ENCODE measurements at regions of chr2 and their contacts with region 1.

Region 1: GRCh38 chr2:23092831-23093230 is 292.1 kb upstream of the KLHL29 start:
- DNase-seq: peak in 1 of 2 experiments; percentile 43
- H3K4me3 ChIP-seq: no peak overlapping the region
- H3K4me3 Mint-ChIP-seq: no peak overlapping the region
- H3K27ac Mint-ChIP-seq: no peak overlapping the region
- H3K4me1 ChIP-seq: no peaks in the 10 kb centered on the region
- H3K4me1 Mint-ChIP-seq: peaks cover 3% of the 10 kb centered on the region
- H3K27me3 ChIP-seq: no peaks in the 10 kb centered on the region
- H3K27me3 Mint-ChIP-seq: peaks cover 2% of the 10 kb centered on the region
- CTCF ChIP-seq: no peak

Region 2: DNA sequence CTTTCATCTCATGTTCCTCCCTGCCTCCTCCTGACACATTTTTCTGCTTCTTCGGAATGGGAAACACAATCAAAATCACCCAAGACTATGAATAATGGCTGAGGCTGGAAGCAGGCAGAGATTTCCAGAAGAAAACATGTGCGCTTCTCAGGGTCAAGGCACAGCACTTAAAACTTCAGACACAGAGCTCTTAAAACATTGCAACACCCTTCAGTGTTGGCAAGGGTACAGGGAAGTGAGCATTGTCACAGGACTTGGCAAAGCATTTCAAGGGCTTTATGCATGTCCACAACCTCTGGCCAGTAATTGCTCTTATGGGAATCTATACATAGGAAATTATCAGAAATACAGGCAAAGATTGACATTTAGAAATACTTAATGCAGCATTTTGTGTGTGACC is 185.5 kb before region 1 on chr2:
- CTCF ChIA-PET with region 1: no interaction called
- POLR2A ChIA-PET with region 1: no interaction called
- intact Hi-C with region 1: no loop called
- DNase-seq: no peak
- H3K4me3 ChIP-seq: no peak overlapping the region
- H3K4me3 Mint-ChIP-seq: no peak overlapping the region
- H3K27ac Mint-ChIP-seq: no peak overlapping the region
- H3K4me1 ChIP-seq: no peaks in the 10 kb centered on the region
- H3K4me1 Mint-ChIP-seq: no peaks in the 10 kb centered on the region
- H3K27me3 ChIP-seq: no peaks in the 10 kb centered on the region
- H3K27me3 Mint-ChIP-seq: peaks cover 2% of the 10 kb centered on the region
- CTCF ChIP-seq: no peak

Region 3: DNA sequence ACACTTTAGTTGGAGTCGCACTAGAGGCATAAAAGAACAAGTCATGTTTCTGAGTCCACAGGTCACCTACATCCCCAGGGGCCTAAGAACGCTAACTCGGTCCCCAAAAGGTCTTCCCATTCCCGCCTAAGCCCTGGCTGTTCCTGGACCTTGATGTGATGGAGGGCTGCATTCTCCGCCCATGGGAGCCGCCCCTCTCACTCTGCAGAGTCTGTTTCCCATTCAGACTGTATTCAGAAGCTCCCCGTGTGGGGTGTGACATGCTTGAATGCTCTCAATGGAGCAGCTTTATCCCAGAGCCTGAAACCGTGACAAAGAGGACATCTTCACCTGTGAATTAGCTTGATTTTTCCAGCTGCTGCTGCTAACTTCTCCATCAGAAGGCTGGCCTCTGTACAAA is 26.9 kb before region 1 on chr2:
- CTCF ChIA-PET with region 1: no interaction called
- POLR2A ChIA-PET with region 1: no interaction called
- intact Hi-C with region 1: loop called (anchors 2 kb)
- DNase-seq: no peak
- H3K4me3 ChIP-seq: no peak overlapping the region
- H3K4me3 Mint-ChIP-seq: no peak overlapping the region
- H3K27ac Mint-ChIP-seq: no peak overlapping the region
- H3K4me1 ChIP-seq: peaks cover 17% of the 10 kb centered on the region
- H3K4me1 Mint-ChIP-seq: peaks cover 12% of the 10 kb centered on the region
- H3K27me3 ChIP-seq: no peaks in the 10 kb centered on the region
- H3K27me3 Mint-ChIP-seq: no peaks in the 10 kb centered on the region
- CTCF ChIP-seq: no peak

Measured in Caco-2 (cell line).